Transverse colon (tissue), 4 donors: ENCODE measurements at regions of chr6 and their contacts with region 1.

Region 1: DNA sequence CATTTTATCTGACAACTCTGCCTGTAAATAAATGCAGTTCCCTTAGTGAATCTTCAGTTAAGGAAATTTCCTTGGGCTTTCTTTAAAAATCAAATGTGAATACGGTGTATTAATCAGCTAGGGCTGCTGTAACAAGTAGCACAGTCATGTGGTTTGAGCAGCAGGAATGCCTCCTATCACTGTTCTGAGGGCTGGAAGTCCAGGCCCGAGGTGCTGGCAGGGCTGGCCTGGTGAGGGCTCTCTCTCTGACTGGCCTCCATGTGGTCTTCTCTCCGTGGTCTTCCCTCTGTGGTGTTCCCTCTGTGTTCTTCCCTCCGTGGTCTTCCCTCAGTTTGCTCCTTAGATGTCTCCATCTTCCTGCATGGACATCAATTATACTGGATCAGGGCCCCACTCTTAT is 124.1 kb downstream of the SMOC2 start:
- DNase-seq: no peak
- H3K4me3 ChIP-seq: no peak overlapping the region
- H3K27ac ChIP-seq: no peak overlapping the region
- H3K4me1 ChIP-seq: no peaks in the 10 kb centered on the region
- H3K27me3 ChIP-seq: no peaks in the 10 kb centered on the region
- CTCF ChIP-seq: no peak
- EP300 ChIP-seq: no peak
- POLR2A ChIP-seq: no peak

Region 2: DNA sequence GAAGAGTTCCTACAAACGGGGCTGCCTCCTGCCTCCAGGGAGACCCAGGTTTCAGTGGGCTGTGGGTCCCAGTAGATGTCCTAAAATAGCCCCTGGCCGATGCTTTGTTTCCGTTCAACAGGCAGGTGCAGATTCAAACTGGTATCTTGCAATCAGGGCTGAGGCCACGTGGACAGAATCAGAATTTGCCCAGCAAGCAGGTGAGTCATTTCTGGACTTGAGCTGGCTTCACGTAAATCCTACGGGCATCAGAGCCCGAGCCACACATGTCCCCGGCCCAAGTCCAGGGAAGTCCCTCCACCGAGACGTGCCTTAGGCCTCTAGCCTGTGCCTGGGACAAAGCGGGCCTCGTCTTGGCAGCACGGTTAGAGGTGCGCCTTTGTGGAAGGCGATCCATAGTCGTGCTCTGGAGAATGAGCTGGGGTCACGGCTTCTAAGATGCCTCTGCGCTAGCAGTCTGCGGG is 384.5 kb before region 1 on chr6:
- in situ Hi-C with region 1: no loop called
- intact Hi-C with region 1: no loop called
- DNase-seq: no peak
- H3K4me3 ChIP-seq: no peak overlapping the region
- H3K27ac ChIP-seq: no peak overlapping the region
- H3K4me1 ChIP-seq: no peaks in the 10 kb centered on the region
- H3K27me3 ChIP-seq: no peaks in the 10 kb centered on the region
- CTCF ChIP-seq: no peak
- EP300 ChIP-seq: no peak
- POLR2A ChIP-seq: no peak

Region 3: DNA sequence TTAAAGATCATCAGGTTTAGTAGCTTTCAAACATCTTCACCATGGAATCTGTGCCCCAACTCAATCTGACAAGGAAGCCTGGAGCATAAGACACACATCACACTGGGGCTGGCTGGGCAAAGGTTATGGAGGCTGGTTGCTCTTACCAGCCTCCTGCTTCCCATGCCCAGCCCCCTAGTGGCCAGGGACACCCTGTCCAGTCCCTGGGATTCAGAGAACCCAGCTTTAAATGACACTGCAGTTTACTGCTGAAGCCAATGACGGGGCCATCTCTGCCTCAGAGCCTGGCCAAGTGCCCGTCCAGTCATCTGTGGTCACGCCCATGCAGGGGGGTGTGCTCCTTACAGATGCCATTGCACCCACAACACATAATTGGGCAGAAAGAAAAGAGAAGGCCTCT is 148.7 kb after region 1 on chr6:
- in situ Hi-C with region 1: no loop called
- intact Hi-C with region 1: no loop called
- DNase-seq: peak; percentile 79
- H3K4me3 ChIP-seq: no peak overlapping the region
- H3K27ac ChIP-seq: no peak overlapping the region
- H3K4me1 ChIP-seq: no peaks in the 10 kb centered on the region
- H3K27me3 ChIP-seq: peaks cover 2% of the 10 kb centered on the region
- CTCF ChIP-seq: peak; percentile 42 to 73 (median 57)
- EP300 ChIP-seq: no peak
- POLR2A ChIP-seq: no peak

Region 4: DNA sequence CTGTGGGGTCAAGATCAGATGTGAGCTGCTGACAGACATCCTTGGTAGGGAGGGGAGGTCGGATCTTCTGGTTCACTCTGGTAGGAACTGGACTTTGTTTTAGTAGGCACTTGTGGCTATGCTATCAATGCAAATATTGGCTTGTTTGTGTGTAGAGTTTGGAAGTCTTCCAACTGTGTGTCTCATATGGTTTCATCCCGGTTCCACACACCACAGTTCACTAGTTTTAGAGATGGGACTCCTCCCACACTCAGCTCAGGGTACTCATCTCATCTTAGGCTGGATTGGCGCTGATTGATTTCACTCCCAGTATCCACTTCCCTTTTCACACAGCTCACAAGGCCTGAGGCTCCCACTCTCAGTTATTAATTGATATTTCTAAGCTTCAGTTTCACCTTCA is 527.3 kb after region 1 on chr6:
- in situ Hi-C with region 1: no loop called
- intact Hi-C with region 1: no loop called
- DNase-seq: no peak
- H3K4me3 ChIP-seq: no peak overlapping the region
- H3K27ac ChIP-seq: no peak overlapping the region
- H3K4me1 ChIP-seq: no peaks in the 10 kb centered on the region
- H3K27me3 ChIP-seq: no peaks in the 10 kb centered on the region
- CTCF ChIP-seq: no peak
- EP300 ChIP-seq: no peak
- POLR2A ChIP-seq: no peak

Region 5: GRCh38 chr6:170063851-170064602 is 1498.9 kb after region 1 on chr6:
- in situ Hi-C with region 1: no loop called
- intact Hi-C with region 1: loop called (anchors 5 kb)
- DNase-seq: peak; percentile 4
- H3K4me3 ChIP-seq: no peak overlapping the region
- H3K27ac ChIP-seq: no peak overlapping the region
- H3K4me1 ChIP-seq: no peaks in the 10 kb centered on the region
- H3K27me3 ChIP-seq: no peaks in the 10 kb centered on the region
- CTCF ChIP-seq: no peak
- EP300 ChIP-seq: no peak
- POLR2A ChIP-seq: no peak